ENCODE measurements at regions of chr5 and their contacts with region 1.

Region 1: DNA sequence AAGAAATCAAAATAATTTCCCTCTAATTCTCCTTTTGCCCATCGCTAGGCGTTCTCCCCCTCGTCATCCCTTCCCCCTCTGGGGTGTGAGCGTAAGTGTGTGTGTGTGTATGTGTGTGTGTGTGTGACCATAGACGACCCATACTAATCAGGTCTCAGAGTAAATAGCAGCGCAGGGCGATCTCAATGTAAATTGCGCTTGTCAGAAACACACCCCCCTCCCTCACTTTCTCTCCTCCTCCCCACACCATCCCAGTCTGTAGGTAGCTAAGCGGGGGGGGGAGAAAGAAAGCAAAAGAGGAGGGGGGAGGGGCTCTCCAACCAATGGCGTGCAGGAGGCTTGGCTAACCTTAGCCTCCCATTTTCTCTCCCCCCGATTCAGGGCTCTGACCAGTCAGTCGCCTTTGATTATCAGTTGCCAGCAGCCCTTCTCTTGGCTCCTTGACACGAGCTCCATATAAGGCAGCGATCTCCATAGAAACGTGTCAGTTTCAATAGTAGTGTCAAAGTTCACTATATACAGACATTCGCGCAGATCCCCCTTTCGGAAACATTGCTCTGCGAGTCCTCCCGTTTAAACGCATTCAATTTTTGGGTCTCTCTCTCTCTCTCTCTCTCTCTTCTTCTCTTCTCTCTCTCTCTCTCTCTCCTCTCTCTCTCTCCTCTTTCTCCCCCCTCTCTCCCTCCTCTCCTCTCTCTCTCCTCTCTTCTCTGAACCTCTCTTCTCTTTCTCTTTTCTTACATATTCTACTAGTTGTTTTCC is at the start of gene NR2F1:
- DNase-seq: no peak
- total RNA-seq, gene NR2F1: 0.73 TPM

Region 2: DNA sequence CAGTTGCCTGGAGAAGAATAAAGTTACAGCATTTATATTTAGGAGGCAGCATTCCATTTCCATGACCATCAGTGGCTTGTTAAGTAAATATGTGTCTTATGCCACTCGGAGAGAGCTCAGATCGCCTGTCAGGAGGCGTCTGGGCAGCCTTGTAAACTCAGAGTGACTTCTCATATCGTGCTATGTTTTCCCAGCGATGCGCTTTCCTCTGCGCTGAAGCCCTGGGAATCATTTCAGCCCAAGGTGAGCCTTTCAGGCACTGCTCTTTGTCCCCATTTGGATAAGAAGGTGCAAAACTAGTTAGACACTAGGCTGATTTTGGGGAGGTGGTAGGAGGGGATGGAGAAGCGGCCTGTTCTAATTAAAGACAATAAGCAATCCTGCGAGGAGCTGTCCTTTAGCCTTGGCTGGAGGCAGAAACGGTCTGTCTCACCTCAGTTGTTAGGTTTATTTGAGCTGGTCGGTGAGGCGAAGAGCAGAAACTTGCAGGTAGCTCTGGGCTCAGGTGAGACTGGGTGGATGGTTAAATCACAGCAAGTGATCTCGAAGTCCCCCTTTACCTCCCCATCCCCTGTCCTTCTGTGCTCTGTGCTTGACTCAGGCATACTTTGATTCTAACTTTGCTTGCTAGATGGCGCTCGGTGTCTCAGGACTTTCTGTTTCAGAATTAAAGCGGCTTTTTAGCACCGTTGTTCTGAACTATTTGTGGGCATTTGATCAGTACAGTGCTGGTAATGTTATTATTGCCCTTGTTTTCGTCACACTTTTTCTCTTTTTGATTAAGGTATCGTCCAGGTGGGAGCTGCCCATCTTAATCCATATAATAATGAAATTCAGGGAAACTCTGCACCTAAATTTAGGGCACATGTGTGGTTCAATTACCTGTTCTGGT is 24.8 kb after region 1 on chr5:
- intact Hi-C with region 1: loop called (anchors 2 kb)
- DNase-seq: no peak

Region 3: DNA sequence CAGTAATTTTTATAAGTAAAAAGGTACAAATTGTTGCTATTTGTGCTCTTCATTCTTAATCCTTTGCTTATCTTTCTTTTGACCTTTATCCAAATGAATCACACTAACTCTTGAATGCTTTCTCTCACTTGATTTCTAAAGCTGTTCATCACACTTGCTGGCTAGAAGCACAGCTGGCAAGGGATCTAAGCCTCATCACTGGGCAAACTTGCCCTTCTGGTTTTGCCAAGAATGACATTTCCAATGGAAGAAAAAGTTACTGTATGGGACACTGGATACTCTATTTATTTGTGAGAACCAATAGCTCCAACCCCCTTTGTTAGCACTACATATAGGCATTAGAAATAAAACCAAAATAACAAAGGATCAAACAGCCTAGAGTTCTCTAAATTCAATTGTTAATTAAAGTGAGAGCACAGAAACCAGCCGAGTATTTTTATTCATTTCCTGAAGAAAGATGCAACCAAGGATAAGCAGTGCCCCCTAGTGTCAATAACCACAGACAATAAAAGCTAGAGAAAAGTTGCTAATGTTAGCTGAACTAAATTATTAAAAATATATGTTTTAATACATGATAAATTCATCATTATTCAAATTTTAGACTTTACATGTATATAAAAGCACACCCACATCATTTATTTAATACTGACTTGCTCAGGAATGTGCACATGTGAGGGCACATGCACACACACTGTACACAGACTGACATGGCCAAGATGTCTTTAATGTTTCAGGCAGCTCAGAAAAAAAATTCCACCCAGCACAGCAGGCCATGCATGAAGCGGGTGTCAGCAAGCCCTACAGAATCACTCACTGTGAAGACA is 218.3 kb after region 1 on chr5:
- intact Hi-C with region 1: loop called (anchors 2 kb)
- DNase-seq: no peak

Region 4: DNA sequence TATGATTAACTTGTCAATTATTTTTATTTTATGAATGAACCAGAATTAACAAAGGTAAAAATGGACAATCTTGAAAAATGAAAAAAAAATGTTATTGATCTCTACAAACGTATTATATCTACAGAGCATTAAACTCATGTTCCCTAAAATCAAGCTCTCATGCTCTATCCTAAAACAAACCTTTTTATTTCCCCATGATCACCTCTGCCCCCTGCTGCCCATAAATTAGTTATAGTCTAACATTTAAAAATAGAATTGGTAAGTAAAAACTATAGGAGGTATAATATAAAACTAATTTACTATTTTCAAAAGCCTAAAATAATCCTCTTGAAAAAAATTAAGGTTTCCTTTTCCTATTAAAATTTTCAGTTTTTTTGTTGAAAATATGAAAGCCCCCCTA is 326.5 kb after region 1 on chr5:
- intact Hi-C with region 1: loop called (anchors 10 kb)
- DNase-seq: no peak

Region 5: GRCh38 chr5:94111209-94112004 is 528.5 kb after region 1 on chr5:
- intact Hi-C with region 1: loop called (anchors 5 kb)
- DNase-seq: peak; percentile 97

Measured in cardiac septum (tissue), 1 donor.